Activated T-helper 1 cell treated with anti-CD3 and anti-CD28 coated beads, Interleukin-12 subunit alpha, Interleukin-12 subunit beta, Interleukin-2, Interleukin-4 antibody, amounts not matched to agents 30 ng/mL and 10 ng/mL and 1 ng/mL, durations not matched to agents 14 hours and 24 hours and 36 hours (primary cell): ENCODE measurements at regions of chr13 and their contacts with region 1.

Region 1: GRCh38 chr13:50075619-50076097 is 60.4 kb downstream of the KCNRG start:
- DNase-seq: no peak
- H3K4me3 Mint-ChIP-seq: peak overlapping the region; percentile 40
- H3K27ac Mint-ChIP-seq: peak overlapping the region; percentile 19
- H3K4me1 Mint-ChIP-seq: peaks cover 58% of the 10 kb centered on the region
- H3K27me3 Mint-ChIP-seq: no peaks in the 10 kb centered on the region

Region 2: DNA sequence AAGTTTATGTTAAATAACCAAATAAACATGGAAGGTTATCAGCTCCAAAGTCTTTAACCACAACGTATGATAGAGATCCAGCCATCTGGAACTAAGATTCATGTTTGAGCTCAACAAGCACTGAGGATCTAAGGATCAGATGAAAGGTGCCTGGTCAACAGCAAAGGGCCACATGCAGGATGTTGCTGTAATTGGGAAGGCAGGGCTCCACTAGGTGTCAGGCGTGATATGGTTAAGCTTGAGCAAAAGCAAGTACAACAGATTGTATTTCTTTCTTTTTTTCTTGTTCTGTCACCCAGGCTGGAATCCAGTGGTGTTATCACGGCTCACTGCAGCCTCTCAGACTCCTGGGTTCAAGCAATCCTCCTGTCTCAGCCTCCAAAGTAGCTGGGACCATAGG is 396.4 kb before region 1 on chr13:
- intact Hi-C with region 1: no loop called
- DNase-seq: no peak
- H3K4me3 Mint-ChIP-seq: no peak overlapping the region
- H3K27ac Mint-ChIP-seq: no peak overlapping the region
- H3K4me1 Mint-ChIP-seq: peaks cover 20% of the 10 kb centered on the region
- H3K27me3 Mint-ChIP-seq: no peaks in the 10 kb centered on the region

Region 3: GRCh38 chr13:50037788-50038187 is 37.9 kb before region 1 on chr13:
- intact Hi-C with region 1: loop called (anchors 5 kb)
- DNase-seq: no peak
- H3K4me3 Mint-ChIP-seq: no peak overlapping the region
- H3K27ac Mint-ChIP-seq: no peak overlapping the region
- H3K4me1 Mint-ChIP-seq: no peaks in the 10 kb centered on the region
- H3K27me3 Mint-ChIP-seq: no peaks in the 10 kb centered on the region

Region 4: DNA sequence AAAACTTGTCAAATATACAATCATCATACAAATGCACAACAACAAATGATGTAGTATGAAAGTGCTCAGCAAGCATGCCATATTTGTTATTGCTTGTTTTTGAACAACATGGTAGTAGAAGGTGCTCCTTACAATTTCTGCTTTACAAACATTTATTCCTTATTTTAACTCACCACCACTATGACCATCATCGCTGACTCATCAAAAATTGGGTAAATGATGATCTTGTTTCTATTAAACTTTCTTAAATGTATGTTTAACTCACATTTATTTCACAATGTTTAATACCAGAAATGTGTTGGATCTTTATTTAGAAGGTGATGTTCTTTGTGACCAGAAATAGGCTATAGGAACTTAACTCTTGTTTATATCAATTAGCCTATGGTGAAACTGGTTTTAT is 14.9 kb before region 1 on chr13:
- intact Hi-C with region 1: loop called (anchors 2 kb)
- DNase-seq: no peak
- H3K4me3 Mint-ChIP-seq: no peak overlapping the region
- H3K27ac Mint-ChIP-seq: no peak overlapping the region
- H3K4me1 Mint-ChIP-seq: peaks cover 38% of the 10 kb centered on the region
- H3K27me3 Mint-ChIP-seq: no peaks in the 10 kb centered on the region